Activated naive CD4-positive, alpha-beta T cell treated with anti-CD3 and anti-CD28 coated beads for 36 hours (primary cell): ENCODE measurements at regions of chr20 and their contacts with region 1.

Region 1: GRCh38 chr20:50179507-50180016 is 11.1 kb upstream of the CEBPB start:
- DNase-seq: no peak
- H3K4me3 Mint-ChIP-seq: no peak overlapping the region
- H3K27ac Mint-ChIP-seq: no peak overlapping the region
- H3K4me1 Mint-ChIP-seq: no peaks in the 10 kb centered on the region
- H3K27me3 Mint-ChIP-seq: peaks cover 9% of the 10 kb centered on the region

Region 2: GRCh38 chr20:49427751-49428518 is 751.6 kb before region 1 on chr20:
- CTCF ChIA-PET with region 1: no interaction called
- intact Hi-C with region 1: no loop called
- DNase-seq: no peak
- H3K4me3 Mint-ChIP-seq: no peak overlapping the region
- H3K27ac Mint-ChIP-seq: no peak overlapping the region
- H3K4me1 Mint-ChIP-seq: no peaks in the 10 kb centered on the region
- H3K27me3 Mint-ChIP-seq: peaks cover 2% of the 10 kb centered on the region

Region 3: GRCh38 chr20:50467718-50468356 is 288.3 kb after region 1 on chr20:
- CTCF ChIA-PET with region 1: interaction called, 171 read pairs
- intact Hi-C with region 1: no loop called
- DNase-seq: peak; percentile 50
- H3K4me3 Mint-ChIP-seq: no peak overlapping the region
- H3K27ac Mint-ChIP-seq: no peak overlapping the region
- H3K4me1 Mint-ChIP-seq: peaks cover 17% of the 10 kb centered on the region
- H3K27me3 Mint-ChIP-seq: no peaks in the 10 kb centered on the region

Region 4: GRCh38 chr20:50569864-50570836 is 390.6 kb after region 1 on chr20:
- CTCF ChIA-PET with region 1: no interaction called
- intact Hi-C with region 1: no loop called
- DNase-seq: peak; percentile 83
- H3K4me3 Mint-ChIP-seq: peak overlapping the region; percentile 23
- H3K27ac Mint-ChIP-seq: peak overlapping the region; percentile 91
- H3K4me1 Mint-ChIP-seq: peaks cover 84% of the 10 kb centered on the region
- H3K27me3 Mint-ChIP-seq: no peaks in the 10 kb centered on the region